ENCODE measurements at regions of chr1 and their contacts with region 1.

Region 1: GRCh38 chr1:19485362-19486187 is at the start of gene CAPZB:
- DNase-seq: peak; percentile 89
- H3K4me3 ChIP-seq: peak within 1 kb of the TSS; percentile 85 to 99 (median 92)
- H3K27ac ChIP-seq: peak within 1 kb of the TSS; percentile 84
- H3K4me1 ChIP-seq: peaks cover 30% of the 10 kb centered on the region
- H3K27me3 ChIP-seq: no peaks in the 10 kb centered on the region
- CTCF ChIP-seq: no peak
- total RNA-seq, gene CAPZB: 134 to 309 TPM

Region 2: GRCh38 chr1:18668796-18669404 is 816.7 kb before region 1 on chr1:
- CTCF ChIA-PET with region 1: no interaction called
- dilution Hi-C with region 1: no loop called
- in situ Hi-C with region 1: no loop called
- intact Hi-C with region 1: no loop called
- DNase-seq: peak; percentile 87
- H3K4me3 ChIP-seq: no peak overlapping the region
- H3K27ac ChIP-seq: peak overlapping the region; percentile 28
- H3K4me1 ChIP-seq: peaks cover 38% of the 10 kb centered on the region
- H3K27me3 ChIP-seq: no peaks in the 10 kb centered on the region
- CTCF ChIP-seq: no peak

Region 3: DNA sequence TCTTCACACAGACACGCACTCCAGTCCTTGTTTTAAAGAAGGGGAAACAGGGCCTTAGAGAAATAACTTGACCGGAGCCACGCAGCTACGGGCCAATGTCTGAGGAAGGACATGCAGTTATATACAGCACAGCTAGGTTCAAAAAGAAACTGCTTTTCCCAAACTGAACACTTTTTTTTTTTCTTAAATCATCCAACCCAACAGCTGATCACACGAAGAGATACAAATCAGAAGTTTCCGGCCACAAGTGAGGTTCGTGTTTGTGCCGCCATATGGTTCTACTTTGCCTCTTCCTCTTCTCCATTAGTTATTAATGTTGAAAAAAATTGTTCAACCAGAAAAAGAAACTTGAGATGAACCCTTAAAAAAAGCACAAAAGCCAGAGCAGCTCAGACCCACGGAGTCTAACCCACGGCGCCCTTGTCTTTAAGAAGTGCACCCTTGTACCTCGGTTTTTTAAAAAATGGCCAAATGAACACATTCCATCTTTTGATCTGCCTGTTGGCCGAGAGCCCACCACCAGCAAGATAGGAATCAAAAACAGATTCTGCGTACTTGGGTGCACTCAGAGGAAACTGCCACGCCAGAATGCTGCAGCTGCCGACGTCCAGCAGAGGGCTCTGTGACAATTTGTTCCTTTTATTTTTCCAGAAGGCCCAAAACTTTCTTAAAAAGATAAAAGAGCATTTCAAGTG is 94.5 kb before region 1 on chr1:
- CTCF ChIA-PET with region 1: no interaction called
- dilution Hi-C with region 1: no loop called
- in situ Hi-C with region 1: no loop called
- intact Hi-C with region 1: loop called (anchors 2 kb)
- DNase-seq: peak; percentile 25
- H3K4me3 ChIP-seq: no peak overlapping the region
- H3K27ac ChIP-seq: peak overlapping the region; percentile 4
- H3K4me1 ChIP-seq: peaks cover 34% of the 10 kb centered on the region
- H3K27me3 ChIP-seq: no peaks in the 10 kb centered on the region
- CTCF ChIP-seq: peak; percentile 82

Region 4: GRCh38 chr1:19439464-19440171 is 46.0 kb before region 1 on chr1:
- CTCF ChIA-PET with region 1: interaction called, 6 read pairs
- dilution Hi-C with region 1: loop called (anchors 10 kb)
- in situ Hi-C with region 1: no loop called
- intact Hi-C with region 1: loop called (anchors 2 kb)
- DNase-seq: no peak
- H3K4me3 ChIP-seq: no peak overlapping the region
- H3K27ac ChIP-seq: peak overlapping the region; percentile 59
- H3K4me1 ChIP-seq: peaks cover 63% of the 10 kb centered on the region
- H3K27me3 ChIP-seq: no peaks in the 10 kb centered on the region
- CTCF ChIP-seq: peak in 1 of 2 donors; percentile 27

Region 5: DNA sequence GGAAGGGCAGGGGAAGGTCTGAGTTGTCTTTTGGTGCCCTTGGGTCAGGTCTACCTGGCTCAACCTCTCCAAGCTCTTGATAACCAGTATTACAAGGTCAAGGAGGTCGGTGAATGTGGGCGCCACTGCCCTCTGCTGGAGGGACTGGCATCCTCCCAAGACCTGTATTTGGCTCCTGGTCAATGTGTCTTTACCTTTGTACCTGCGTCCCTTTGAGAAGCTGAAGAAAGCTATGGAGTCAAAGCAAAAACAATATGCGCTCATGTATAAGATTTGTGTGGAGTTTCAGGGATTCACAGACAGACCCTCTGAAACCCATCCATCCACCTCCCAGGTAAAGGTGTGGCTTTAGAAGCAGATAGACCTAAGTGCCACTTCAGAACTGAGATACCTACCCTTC is 96.7 kb after region 1 on chr1:
- CTCF ChIA-PET with region 1: interaction called, 7 read pairs
- dilution Hi-C with region 1: no loop called
- in situ Hi-C with region 1: loop called in 1 of 2 experiments (anchors 5 kb)
- intact Hi-C with region 1: loop called (anchors 1 kb)
- DNase-seq: peak; percentile 42
- H3K4me3 ChIP-seq: no peak overlapping the region
- H3K27ac ChIP-seq: no peak overlapping the region
- H3K4me1 ChIP-seq: no peaks in the 10 kb centered on the region
- H3K27me3 ChIP-seq: no peaks in the 10 kb centered on the region
- CTCF ChIP-seq: peak; percentile 81 to 83

Region 6: GRCh38 chr1:19628879-19629278 is 143.3 kb after region 1 on chr1:
- CTCF ChIA-PET with region 1: no interaction called
- dilution Hi-C with region 1: loop called (anchors 5 kb)
- in situ Hi-C with region 1: no loop called
- intact Hi-C with region 1: no loop called
- DNase-seq: no peak
- H3K4me3 ChIP-seq: no peak overlapping the region
- H3K27ac ChIP-seq: no peak overlapping the region
- H3K4me1 ChIP-seq: no peaks in the 10 kb centered on the region
- H3K27me3 ChIP-seq: no peaks in the 10 kb centered on the region
- CTCF ChIP-seq: no peak